ENCODE measurements at regions of chr20 and their contacts with region 1.

Region 1: DNA sequence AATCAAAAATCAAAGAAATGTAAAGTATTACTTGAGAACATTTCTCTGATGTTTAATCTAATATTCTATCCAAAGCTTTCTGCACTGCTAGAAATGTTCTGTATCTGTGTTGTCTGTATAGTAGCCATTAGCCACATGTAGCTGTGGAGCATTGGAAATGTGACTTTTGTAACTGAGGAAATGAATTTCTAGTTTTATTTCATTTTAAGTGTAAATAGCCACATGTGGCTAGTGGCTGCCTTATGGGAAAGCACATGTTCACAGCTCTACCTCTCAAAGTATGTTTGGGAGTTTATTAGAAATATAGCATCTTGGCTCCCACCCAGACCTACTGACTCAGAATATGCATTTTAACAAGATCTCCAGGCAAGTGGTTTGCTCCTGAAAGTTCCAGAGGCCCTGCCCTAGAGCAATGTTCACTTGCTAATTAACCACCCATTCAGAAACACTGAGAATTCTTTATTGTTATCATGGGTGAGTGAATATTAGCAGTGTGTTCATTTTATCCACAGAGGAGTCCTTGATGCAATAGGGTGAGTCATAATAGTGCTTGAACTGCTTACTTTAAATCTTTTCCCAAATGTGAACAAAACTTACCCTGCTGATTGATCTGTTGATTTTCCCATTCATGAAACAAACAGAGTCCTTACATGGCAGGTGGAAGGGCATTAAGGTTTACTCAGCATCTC is 282.7 kb downstream of the PLCB1 start:
- DNase-seq: no peak
- H3K4me3 ChIP-seq: no peak overlapping the region
- H3K27ac ChIP-seq: no peak overlapping the region
- H3K27me3 ChIP-seq: no peaks in the 10 kb centered on the region
- CTCF ChIP-seq: no peak

Region 2: GRCh38 chr20:8372824-8373380 is 41.8 kb before region 1 on chr20:
- intact Hi-C with region 1: no loop called
- DNase-seq: no peak
- H3K4me3 ChIP-seq: no peak overlapping the region
- H3K27ac ChIP-seq: no peak overlapping the region
- H3K27me3 ChIP-seq: no peaks in the 10 kb centered on the region
- CTCF ChIP-seq: no peak

Region 3: DNA sequence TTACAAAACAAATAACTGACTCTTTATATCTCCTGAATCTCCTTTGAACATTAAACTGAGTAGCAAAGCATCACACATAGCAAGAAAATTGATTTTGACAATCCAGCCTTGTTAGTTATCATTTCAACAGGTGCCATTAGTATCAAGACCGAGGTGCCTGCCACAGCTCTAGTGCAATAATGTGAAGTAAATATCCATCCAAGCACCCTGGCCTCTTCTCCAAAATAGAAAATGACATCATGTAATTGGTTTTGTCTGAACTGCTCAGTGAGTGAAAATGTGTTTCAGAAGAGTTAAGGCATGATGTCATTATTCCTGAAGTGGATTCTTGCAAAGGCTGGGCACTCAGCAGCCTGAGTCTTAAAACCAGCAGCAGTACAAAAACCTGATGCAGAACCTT is 58.7 kb after region 1 on chr20:
- intact Hi-C with region 1: loop called in 1 of 2 experiments (anchors 2 kb)
- DNase-seq: no peak
- H3K4me3 ChIP-seq: no peak overlapping the region
- H3K27ac ChIP-seq: no peak overlapping the region
- H3K27me3 ChIP-seq: no peaks in the 10 kb centered on the region
- CTCF ChIP-seq: no peak